ENCODE measurements at regions of chr5 and their contacts with region 1.

Region 1: DNA sequence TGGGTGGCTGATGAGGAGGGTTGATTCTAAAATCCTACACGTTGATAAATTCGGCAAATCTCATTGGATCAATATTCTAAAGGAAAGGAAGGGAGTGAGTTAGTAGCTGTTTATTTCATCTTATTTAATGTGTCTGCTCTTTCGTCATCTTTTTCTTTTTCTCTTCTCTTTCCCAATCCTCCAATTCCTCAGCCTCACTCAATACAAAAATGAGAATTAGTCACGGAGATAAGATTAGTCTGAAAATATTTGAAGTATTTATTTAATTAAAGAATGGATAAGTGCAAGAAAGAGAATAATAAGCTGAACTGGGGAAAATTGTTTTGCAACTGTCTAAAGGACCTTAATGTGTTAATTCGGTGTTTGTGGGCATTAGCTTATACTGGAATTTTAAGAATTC is 1095.1 kb downstream of the DTWD2 start:
- DNase-seq: no peak
- ATAC-seq: no peak

Region 2: GRCh38 chr5:116157902-116158301 is 1735.3 kb before region 1 on chr5:
- intact Hi-C with region 1: loop called (anchors 5 kb)
- DNase-seq: no peak
- ATAC-seq: no peak

Region 3: GRCh38 chr5:117812861-117813260 is 80.3 kb before region 1 on chr5:
- intact Hi-C with region 1: no loop called
- DNase-seq: no peak
- ATAC-seq: no peak

Region 4: GRCh38 chr5:117833691-117834090 is 59.5 kb before region 1 on chr5:
- intact Hi-C with region 1: no loop called
- DNase-seq: no peak
- ATAC-seq: no peak

Region 5: GRCh38 chr5:118185018-118185417 is 291.8 kb after region 1 on chr5:
- intact Hi-C with region 1: no loop called
- DNase-seq: no peak
- ATAC-seq: no peak

Measured in sciatic nerve (tissue), 2 donors.